Caco-2 (cell line): ENCODE measurements at regions of chr1 and their contacts with region 1.

Region 1: GRCh38 chr1:152533327-152533938 is 19.2 kb downstream of the CRCT1 start:
- DNase-seq: peak; percentile 71 to 83
- H3K4me3 ChIP-seq: no peak overlapping the region
- H3K4me3 Mint-ChIP-seq: no peak overlapping the region
- H3K27ac Mint-ChIP-seq: no peak overlapping the region
- H3K4me1 ChIP-seq: no peaks in the 10 kb centered on the region
- H3K4me1 Mint-ChIP-seq: no peaks in the 10 kb centered on the region
- H3K27me3 ChIP-seq: no peaks in the 10 kb centered on the region
- H3K27me3 Mint-ChIP-seq: no peaks in the 10 kb centered on the region
- CTCF ChIP-seq: peak; percentile 89 to 95

Region 2: GRCh38 chr1:152398812-152399698 is 134.4 kb before region 1 on chr1:
- CTCF ChIA-PET with region 1: interaction called, 6 read pairs
- POLR2A ChIA-PET with region 1: no interaction called
- intact Hi-C with region 1: loop called (anchors 10 kb)
- DNase-seq: peak; percentile 50 to 55
- H3K4me3 ChIP-seq: no peak overlapping the region
- H3K4me3 Mint-ChIP-seq: no peak overlapping the region
- H3K27ac Mint-ChIP-seq: no peak overlapping the region
- H3K4me1 ChIP-seq: no peaks in the 10 kb centered on the region
- H3K4me1 Mint-ChIP-seq: no peaks in the 10 kb centered on the region
- H3K27me3 ChIP-seq: no peaks in the 10 kb centered on the region
- H3K27me3 Mint-ChIP-seq: peaks cover 11% of the 10 kb centered on the region
- CTCF ChIP-seq: peak; percentile 61 to 79

Region 3: DNA sequence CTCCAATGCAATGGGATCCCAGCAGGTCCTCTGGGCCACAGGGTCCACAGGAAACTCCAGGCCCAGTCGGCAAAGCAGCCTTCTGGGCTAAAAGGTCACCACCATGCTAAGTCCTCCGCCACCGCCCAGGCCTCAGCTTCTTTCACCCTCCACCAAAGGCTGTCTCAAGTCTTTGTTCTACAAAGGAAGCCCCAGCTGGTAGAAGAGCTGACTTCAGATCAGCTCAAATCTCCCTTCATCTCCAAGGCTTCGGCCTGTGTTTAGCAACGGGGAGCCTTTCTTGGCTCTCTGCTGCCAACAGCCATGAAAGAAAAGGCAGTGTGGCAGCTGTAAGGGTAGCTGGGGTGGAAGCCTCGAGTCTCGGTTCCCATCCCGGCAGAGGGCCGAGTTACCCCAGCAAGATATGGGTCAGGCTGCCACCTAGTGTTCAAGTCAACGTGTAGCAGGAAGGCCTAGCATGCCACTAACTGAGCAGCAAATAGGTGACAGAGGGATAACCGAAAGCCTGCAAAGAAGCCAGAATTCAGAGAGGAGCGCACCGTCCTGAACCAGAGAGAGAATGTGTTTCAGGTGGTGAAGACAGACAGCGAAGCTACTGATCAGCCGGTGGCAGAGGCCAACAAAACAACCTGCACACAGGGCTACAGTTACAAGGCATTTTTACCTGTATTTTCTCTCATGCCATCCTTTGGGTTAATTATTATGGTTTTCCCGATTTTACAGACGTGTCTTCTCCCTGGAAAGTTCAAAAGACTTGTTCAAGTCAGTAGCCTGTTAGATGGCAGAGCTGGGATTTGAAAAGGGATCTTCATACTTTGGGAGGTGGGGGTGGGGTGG is 92.6 kb before region 1 on chr1:
- CTCF ChIA-PET with region 1: no interaction called
- POLR2A ChIA-PET with region 1: no interaction called
- intact Hi-C with region 1: no loop called
- DNase-seq: peak; percentile 75 to 76
- H3K4me3 ChIP-seq: no peak overlapping the region
- H3K4me3 Mint-ChIP-seq: no peak overlapping the region
- H3K27ac Mint-ChIP-seq: no peak overlapping the region
- H3K4me1 ChIP-seq: no peaks in the 10 kb centered on the region
- H3K4me1 Mint-ChIP-seq: no peaks in the 10 kb centered on the region
- H3K27me3 ChIP-seq: no peaks in the 10 kb centered on the region
- H3K27me3 Mint-ChIP-seq: peaks cover 25% of the 10 kb centered on the region
- CTCF ChIP-seq: peak; percentile 68 to 81

Region 4: GRCh38 chr1:152486400-152487006 is 46.9 kb before region 1 on chr1:
- CTCF ChIA-PET with region 1: interaction called, 7 read pairs
- POLR2A ChIA-PET with region 1: no interaction called
- intact Hi-C with region 1: loop called (anchors 1 kb)
- DNase-seq: peak in 1 of 2 experiments; percentile 36
- H3K4me3 ChIP-seq: no peak overlapping the region
- H3K4me3 Mint-ChIP-seq: no peak overlapping the region
- H3K27ac Mint-ChIP-seq: no peak overlapping the region
- H3K4me1 ChIP-seq: no peaks in the 10 kb centered on the region
- H3K4me1 Mint-ChIP-seq: no peaks in the 10 kb centered on the region
- H3K27me3 ChIP-seq: no peaks in the 10 kb centered on the region
- H3K27me3 Mint-ChIP-seq: peaks cover 7% of the 10 kb centered on the region
- CTCF ChIP-seq: peak; percentile 53 to 62

Region 5: DNA sequence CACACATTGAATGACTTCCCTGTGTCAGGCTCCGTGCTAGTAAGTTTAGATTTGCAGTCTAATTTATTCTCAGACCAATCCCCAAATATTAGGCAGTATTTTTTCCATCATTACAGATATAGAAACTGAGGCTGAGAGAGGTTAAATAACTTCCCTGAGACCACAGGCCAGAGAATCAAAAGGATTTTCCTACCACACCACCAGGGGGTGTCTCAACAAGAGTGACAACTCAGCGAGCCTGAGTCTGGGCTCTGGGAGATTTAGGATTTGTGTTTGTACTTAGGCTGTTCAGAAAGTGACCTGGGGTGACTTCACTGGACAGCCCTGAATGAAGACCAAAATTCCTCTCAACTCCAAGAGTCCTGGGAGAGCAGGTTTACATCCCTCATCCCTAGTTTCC is 36.2 kb before region 1 on chr1:
- CTCF ChIA-PET with region 1: interaction called, 21 read pairs
- POLR2A ChIA-PET with region 1: no interaction called
- intact Hi-C with region 1: loop called (anchors 1 kb)
- DNase-seq: peak in 1 of 2 experiments; percentile 53
- H3K4me3 ChIP-seq: no peak overlapping the region
- H3K4me3 Mint-ChIP-seq: no peak overlapping the region
- H3K27ac Mint-ChIP-seq: no peak overlapping the region
- H3K4me1 ChIP-seq: peaks cover 13% of the 10 kb centered on the region
- H3K4me1 Mint-ChIP-seq: peaks cover 6% of the 10 kb centered on the region
- H3K27me3 ChIP-seq: no peaks in the 10 kb centered on the region
- H3K27me3 Mint-ChIP-seq: no peaks in the 10 kb centered on the region
- CTCF ChIP-seq: peak; percentile 63 to 68

Region 6: DNA sequence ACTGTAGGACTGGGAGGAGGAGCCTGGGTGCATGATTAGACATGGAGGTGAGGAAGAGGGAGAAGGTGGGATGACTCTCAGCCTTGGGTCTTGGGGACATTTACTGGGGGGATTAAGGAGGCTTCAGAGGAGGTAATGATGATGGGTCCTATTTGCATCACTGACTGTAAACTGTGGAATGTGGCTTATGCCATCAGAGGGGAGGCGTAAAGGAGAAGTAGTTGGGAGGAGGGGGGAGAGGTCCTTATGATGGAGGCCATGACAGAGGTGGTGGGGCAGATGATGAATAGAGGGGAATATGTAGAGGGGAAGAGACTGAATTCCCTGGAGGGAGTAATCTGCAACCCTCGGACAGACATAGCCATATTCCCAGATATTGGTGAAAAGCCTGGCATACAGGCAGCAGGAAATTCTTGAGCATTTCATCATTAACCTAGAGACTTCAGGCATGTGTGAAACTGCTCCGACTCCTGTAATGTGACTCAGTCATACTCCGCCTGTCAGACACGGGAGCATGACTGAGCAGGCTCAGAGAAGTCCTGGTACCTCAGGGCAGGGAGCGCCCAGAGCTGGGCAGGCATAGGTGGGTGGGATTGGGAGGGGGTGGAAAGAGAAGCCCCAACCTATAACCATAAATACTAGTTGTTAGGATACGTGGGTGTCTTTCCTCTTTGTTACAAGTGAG is 30.8 kb before region 1 on chr1:
- CTCF ChIA-PET with region 1: interaction called, 21 read pairs
- POLR2A ChIA-PET with region 1: no interaction called
- intact Hi-C with region 1: loop called (anchors 1 kb)
- DNase-seq: no peak
- H3K4me3 ChIP-seq: no peak overlapping the region
- H3K4me3 Mint-ChIP-seq: no peak overlapping the region
- H3K27ac Mint-ChIP-seq: peak overlapping the region; percentile 50
- H3K4me1 ChIP-seq: peaks cover 17% of the 10 kb centered on the region
- H3K4me1 Mint-ChIP-seq: peaks cover 10% of the 10 kb centered on the region
- H3K27me3 ChIP-seq: no peaks in the 10 kb centered on the region
- H3K27me3 Mint-ChIP-seq: no peaks in the 10 kb centered on the region
- CTCF ChIP-seq: no peak